Panc1 (cell line): ENCODE measurements at regions of chr7 and their contacts with region 1.

Region 1: GRCh38 chr7:28062197-28062991 is 118.2 kb downstream of the JAZF1 start:
- DNase-seq: peak; percentile 43
- ATAC-seq: peak; percentile 96
- H3K4me3 ChIP-seq: no peak overlapping the region
- H3K27ac ChIP-seq: peak overlapping the region; percentile 79
- H3K4me1 ChIP-seq: peaks cover 43% of the 10 kb centered on the region
- H3K27me3 ChIP-seq: no peaks in the 10 kb centered on the region
- CTCF ChIP-seq: peak; percentile 92

Region 2: DNA sequence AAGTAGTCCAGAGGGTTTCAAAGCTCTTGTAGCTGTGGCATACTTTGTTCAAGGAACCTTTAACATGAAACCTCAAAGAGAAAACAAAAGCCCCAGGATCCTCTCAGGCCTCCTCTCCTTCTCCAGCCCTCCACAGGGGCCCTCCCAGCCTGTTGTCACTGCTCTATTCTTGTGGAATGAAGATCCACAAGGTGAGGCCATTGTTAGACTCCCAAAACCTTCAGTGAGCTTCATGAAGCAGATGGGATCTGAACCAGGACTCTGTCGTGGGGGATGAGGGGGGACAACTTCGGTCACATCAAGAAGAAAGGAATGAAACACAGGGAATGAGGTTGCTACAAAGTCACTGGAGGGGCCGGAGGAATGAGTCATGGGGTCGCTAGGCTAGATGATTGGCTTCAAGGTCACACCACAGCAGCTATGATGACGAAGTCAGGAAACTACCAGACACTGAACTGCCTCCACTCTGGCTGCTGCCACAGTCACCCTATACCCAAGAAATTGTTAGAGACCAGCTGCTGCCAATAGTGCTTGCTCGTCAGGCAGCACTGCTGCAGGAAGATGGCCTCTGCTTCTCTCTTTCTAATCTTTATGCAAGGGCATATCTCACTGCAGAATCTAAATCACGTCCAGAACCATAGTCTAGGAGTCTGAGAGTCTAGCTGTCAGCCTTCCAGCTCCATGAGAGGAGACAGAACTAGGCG is 608.5 kb before region 1 on chr7:
- CTCF ChIA-PET with region 1: no interaction called
- POLR2A ChIA-PET with region 1: interaction called, 13 read pairs
- in situ Hi-C with region 1: no loop called
- intact Hi-C with region 1: no loop called
- DNase-seq: no peak
- ATAC-seq: peak; percentile 64; the same call in 1 of the 2 replicates
- H3K4me3 ChIP-seq: no peak overlapping the region
- H3K27ac ChIP-seq: no peak overlapping the region
- H3K4me1 ChIP-seq: no peaks in the 10 kb centered on the region
- H3K27me3 ChIP-seq: peaks cover 9% of the 10 kb centered on the region
- CTCF ChIP-seq: no peak

Region 3: GRCh38 chr7:28078036-28078901 is 15.9 kb after region 1 on chr7:
- CTCF ChIA-PET with region 1: interaction called, 21 read pairs
- POLR2A ChIA-PET with region 1: interaction called, 3 read pairs
- in situ Hi-C with region 1: no loop called
- intact Hi-C with region 1: no loop called
- DNase-seq: no peak
- ATAC-seq: peak; percentile 73
- H3K4me3 ChIP-seq: no peak overlapping the region
- H3K27ac ChIP-seq: peak overlapping the region; percentile 66
- H3K4me1 ChIP-seq: peaks cover 13% of the 10 kb centered on the region
- H3K27me3 ChIP-seq: no peaks in the 10 kb centered on the region
- CTCF ChIP-seq: peak; percentile 99

Region 4: DNA sequence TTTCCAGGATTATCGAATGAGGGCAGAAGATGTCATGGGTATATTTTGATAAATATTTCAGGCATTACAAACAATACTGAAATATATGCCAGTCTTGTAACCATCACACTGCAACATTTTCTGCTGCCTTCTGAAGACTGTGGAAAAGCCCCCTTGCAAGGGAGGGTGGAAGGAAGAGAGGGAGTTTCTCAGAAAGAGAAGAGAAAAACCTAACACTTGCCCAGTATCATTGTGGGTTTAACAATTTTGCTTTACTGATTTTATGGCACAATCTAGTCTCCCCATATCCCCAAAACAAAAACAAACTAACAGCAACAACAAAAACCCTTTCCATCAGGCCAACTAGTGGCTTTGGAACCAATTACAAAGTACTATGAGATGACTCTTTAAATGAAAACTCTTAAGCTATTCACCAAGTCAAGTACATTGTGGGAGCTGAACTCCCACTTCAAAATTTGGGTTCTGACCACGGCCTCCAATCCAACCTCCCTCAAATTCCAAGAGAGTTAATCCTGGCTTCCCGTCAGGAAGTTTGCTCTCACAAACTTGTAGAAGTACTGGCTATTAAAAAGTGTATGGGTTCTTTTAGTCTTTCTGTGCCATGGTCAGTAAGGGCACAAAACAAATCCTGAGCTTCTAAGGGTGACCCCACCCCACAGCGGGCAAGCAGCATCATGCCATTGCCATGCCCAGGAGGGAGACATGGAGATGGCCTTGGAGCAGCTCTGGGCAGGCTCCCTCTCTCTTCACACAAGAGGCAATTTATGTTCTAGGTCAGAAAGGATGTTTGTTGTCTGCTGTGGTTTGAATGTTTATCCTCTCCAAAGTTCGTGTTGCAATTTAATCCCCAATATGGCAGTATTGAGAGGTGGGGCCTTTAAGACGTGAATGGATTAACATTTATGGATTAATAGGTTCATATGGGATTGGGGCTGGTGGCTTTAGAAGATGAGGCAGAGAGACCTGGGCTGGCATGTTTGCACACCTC is 21.9 kb after region 1 on chr7:
- CTCF ChIA-PET with region 1: interaction called, 8 read pairs
- POLR2A ChIA-PET with region 1: interaction called, 10 read pairs
- in situ Hi-C with region 1: no loop called
- intact Hi-C with region 1: no loop called
- DNase-seq: no peak
- ATAC-seq: no peak
- H3K4me3 ChIP-seq: no peak overlapping the region
- H3K27ac ChIP-seq: peak overlapping the region; percentile 9; the same call in 1 of the 2 replicates
- H3K4me1 ChIP-seq: no peaks in the 10 kb centered on the region
- H3K27me3 ChIP-seq: no peaks in the 10 kb centered on the region
- CTCF ChIP-seq: no peak